Sciatic nerve (tissue), 2 donors: ENCODE measurements at regions of chr21 and their contacts with region 1.

Region 1: GRCh38 chr21:42777757-42778344 is 101.5 kb downstream of the WDR4 start:
- DNase-seq: peak; percentile 63
- ATAC-seq: peak; percentile 74

Region 2: GRCh38 chr21:42093991-42094421 is 683.8 kb before region 1 on chr21:
- intact Hi-C with region 1: no loop called
- DNase-seq: no peak
- ATAC-seq: no peak

Region 3: GRCh38 chr21:42799516-42799915 is 21.7 kb after region 1 on chr21:
- intact Hi-C with region 1: loop called (anchors 1 kb)
- DNase-seq: no peak
- ATAC-seq: no peak